Activated CD4-positive, alpha-beta memory T cell treated with anti-CD3 and anti-CD28 coated beads, Interleukin-2, amount 10 ng/mL, durations not matched to agents 7 days and 5 days (primary cell): ENCODE measurements at regions of chr14 and their contacts with region 1.

Region 1: DNA sequence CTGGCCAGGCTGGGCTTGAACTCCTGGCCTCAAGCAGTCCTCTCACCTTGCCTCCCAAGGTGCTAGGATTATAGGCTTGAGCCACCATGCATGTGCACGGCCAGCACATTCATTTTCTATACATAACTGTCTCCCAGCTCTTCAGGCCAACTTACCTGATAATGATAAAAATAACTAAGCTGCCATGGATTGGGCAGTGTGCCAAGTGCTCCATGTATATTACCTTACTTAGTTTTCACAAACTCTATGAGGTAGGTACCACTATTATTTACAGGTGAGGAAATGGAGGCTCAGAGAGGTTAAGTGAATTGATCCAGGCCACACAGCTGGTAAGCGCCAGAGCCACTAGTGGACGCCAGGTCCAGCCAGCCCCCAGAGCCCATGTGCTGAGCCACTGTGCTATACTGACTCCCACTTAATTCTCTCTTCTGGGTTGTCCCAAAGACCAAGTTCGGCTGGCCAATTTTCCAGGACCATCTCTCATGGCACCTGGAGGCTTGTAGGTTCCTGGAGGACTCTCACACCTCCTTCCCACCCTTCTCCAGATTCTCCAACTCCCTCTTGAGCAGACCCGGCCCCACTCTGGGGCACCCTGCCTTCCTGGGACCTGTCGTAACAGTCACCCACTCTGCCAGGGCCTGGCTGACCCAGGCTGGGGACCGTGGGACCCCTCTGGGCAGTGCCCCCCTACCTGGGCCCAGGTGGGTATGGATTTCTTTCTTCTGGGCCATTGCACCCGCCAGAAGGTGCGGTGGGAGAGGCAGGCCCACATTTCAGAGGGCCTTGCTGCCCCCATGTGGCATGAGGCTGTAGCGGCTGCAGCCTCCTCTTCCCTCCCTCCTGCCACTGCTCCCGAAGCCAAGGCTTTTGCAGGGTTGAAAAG is 30.2 kb upstream of the CIPC start:
- DNase-seq: peak; percentile 66
- H3K4me3 Mint-ChIP-seq: no peak overlapping the region
- H3K27ac Mint-ChIP-seq: no peak overlapping the region
- H3K4me1 Mint-ChIP-seq: peaks cover 2% of the 10 kb centered on the region
- H3K27me3 Mint-ChIP-seq: peaks cover 17% of the 10 kb centered on the region

Region 2: GRCh38 chr14:76876076-76876475 is 191.8 kb before region 1 on chr14:
- CTCF ChIA-PET with region 1: interaction called, 436 read pairs
- POLR2A ChIA-PET with region 1: interaction called, 8 read pairs
- DNase-seq: peak; percentile 57
- H3K4me3 Mint-ChIP-seq: no peak overlapping the region
- H3K27ac Mint-ChIP-seq: no peak overlapping the region
- H3K4me1 Mint-ChIP-seq: no peaks in the 10 kb centered on the region
- H3K27me3 Mint-ChIP-seq: peaks cover 4% of the 10 kb centered on the region

Region 3: GRCh38 chr14:76956316-76957090 is 111.4 kb before region 1 on chr14:
- CTCF ChIA-PET with region 1: interaction called, 15 read pairs
- POLR2A ChIA-PET with region 1: interaction called, 3 read pairs
- DNase-seq: peak; percentile 94
- H3K4me3 Mint-ChIP-seq: peak overlapping the region; percentile 73
- H3K27ac Mint-ChIP-seq: peak overlapping the region; percentile 96
- H3K4me1 Mint-ChIP-seq: peaks cover 79% of the 10 kb centered on the region
- H3K27me3 Mint-ChIP-seq: peaks cover 4% of the 10 kb centered on the region

Region 4: DNA sequence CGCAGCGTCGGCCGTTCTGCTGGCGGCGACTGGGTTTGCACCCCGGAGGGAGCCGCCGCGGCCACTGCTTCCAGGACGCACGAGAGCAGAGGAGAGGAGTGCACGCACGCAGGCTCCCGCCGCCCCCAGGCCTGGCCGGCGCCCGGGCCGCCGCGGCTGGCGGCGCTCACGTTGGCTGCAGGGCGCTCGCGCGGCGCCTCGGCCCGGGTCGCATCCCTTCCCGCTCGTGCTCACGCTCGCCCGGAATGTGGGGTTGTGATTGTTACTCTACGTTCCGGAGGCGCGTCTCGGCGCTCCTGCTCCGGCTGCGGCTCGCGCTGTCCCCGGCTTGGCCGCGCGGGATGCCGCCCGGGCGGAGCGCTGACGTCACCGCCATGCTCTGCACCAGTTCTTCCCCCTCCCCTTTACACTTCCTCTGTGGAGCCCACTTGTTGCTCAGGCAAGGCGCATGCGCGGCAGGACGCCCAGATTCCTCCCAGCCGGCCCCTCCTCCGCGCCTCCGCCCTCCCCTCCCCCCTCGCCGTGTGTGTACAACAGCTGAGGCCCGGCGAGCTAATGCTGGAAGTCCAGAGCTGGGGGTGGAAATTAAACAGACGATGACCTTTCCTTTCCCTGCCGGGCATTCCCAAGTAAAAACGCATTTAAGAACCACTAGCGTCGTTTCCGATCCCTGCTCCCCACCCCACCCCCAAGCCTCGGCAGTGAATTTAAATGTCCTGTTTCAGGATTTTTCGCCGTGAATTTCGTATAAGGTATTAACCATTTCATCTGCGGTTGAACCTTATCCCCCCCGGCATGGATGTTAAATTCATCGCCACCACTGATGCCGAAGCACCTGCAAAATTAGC is 39.3 kb before region 1 on chr14 and contains the start of gene IRF2BPL:
- CTCF ChIA-PET with region 1: interaction called, 32 read pairs
- POLR2A ChIA-PET with region 1: interaction called, 14 read pairs
- DNase-seq: peak; percentile 95
- H3K4me3 Mint-ChIP-seq: peak within 1 kb of the TSS; percentile 88
- H3K27ac Mint-ChIP-seq: peak within 1 kb of the TSS; percentile 89
- H3K4me1 Mint-ChIP-seq: peaks cover 58% of the 10 kb centered on the region
- H3K27me3 Mint-ChIP-seq: no peaks in the 10 kb centered on the region
- total RNA-seq, gene IRF2BPL: 39.0 to 39.3 TPM

Region 5: GRCh38 chr14:77097700-77098528 is 30.0 kb after region 1 on chr14 and contains the start of gene CIPC:
- CTCF ChIA-PET with region 1: interaction called, 26 read pairs
- POLR2A ChIA-PET with region 1: no interaction called
- DNase-seq: peak; percentile 100
- H3K4me3 Mint-ChIP-seq: peak within 1 kb of the TSS; percentile 94
- H3K27ac Mint-ChIP-seq: peak within 1 kb of the TSS; percentile 91
- H3K4me1 Mint-ChIP-seq: peaks cover 38% of the 10 kb centered on the region
- H3K27me3 Mint-ChIP-seq: peaks cover 3% of the 10 kb centered on the region
- total RNA-seq, gene CIPC: 9.6 to 12.8 TPM